ENCODE measurements at regions of chr22 and their contacts with region 1.

Region 1: GRCh38 chr22:20550821-20551744 is 43.7 kb downstream of the MED15 start:
- DNase-seq: peak; percentile 46 to 84 (median 63)
- ATAC-seq: peak; percentile 55 to 73
- H3K4me3 Mint-ChIP-seq: peak overlapping the region; percentile 75 to 92 (median 86)
- H3K27ac Mint-ChIP-seq: peak overlapping the region; percentile 96 to 100 (median 99)
- H3K4me1 Mint-ChIP-seq: peaks cover 45 to 94% (median 82%) of the 10 kb centered on the region in 4 donors
- H3K27me3 Mint-ChIP-seq: no peaks in the 10 kb centered on the region

Region 2: DNA sequence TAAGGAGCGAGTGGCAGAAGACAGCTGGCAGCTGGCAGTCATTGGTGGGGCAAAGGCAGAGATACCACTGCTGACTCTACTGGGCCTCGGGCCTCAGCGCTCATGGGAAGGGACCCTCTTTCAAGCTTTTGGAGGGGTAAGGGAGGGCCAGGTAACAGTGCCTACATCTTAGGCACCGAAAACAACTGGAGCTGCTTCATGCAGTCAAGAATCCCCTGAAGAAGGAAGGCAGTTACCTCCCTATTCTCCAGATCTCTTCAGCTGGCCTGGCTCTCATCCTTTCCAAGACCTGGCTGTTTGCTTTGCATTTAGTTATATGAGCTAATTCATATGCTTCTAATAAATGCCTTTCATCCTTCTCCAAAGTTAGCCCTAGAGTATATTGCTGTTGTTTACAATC is 173.0 kb before region 1 on chr22:
- POLR2A ChIA-PET with region 1: no interaction called
- DNase-seq: no peak
- ATAC-seq: no peak
- H3K4me3 Mint-ChIP-seq: no peak overlapping the region
- H3K27ac Mint-ChIP-seq: no peak overlapping the region
- H3K4me1 Mint-ChIP-seq: no peaks in the 10 kb centered on the region
- H3K27me3 Mint-ChIP-seq: peaks cover 0 to 1% (median 0%) of the 10 kb centered on the region in 5 donors

Region 3: DNA sequence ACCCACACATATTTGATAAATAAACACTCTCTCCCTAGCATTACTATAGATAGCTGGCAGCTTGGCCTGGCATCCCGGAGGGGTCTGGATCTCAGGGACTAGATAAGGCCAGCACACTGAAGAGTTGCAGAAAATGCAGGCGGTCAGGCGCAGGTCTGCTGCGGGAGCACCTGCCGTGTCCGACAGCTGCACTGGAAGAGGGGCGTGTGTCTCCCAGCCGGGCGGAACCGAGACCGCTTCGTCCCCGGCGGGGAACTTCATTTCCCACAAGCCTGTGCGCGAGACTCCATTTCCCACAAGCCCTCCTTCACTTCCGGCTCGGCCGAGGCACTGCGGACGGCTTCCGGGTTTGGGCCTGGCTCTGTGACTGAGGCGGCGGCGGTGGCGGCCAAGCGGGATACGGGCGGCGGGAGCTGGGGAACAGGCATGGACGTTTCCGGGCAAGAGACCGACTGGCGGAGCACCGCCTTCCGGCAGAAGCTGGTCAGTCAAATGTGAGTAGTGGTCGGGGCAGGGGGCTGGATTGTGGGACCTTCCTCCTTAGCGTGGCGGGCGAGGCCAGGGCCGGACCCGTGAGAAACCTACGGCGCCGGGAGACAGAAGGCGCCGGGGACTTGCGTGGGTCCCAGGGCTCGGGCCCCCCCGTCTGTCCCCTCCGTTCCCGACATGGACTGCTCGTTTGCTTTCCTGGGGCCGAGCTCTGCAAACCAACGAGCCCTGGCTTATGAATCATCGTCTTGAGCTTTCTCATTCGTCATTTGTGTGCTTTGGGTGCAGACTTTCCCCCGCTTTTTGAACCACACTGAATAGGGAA is 43.6 kb before region 1 on chr22 and contains the start of gene MED15:
- POLR2A ChIA-PET with region 1: interaction called, 140 read pairs
- DNase-seq: peak; percentile 76 to 91 (median 84)
- ATAC-seq: peak; percentile 91 to 92
- H3K4me3 Mint-ChIP-seq: peak within 1 kb of the TSS; percentile 94 to 100 (median 97)
- H3K27ac Mint-ChIP-seq: peak within 1 kb of the TSS; percentile 94 to 100 (median 97)
- H3K4me1 Mint-ChIP-seq: peaks cover 35 to 59% (median 53%) of the 10 kb centered on the region in 4 donors
- H3K27me3 Mint-ChIP-seq: no peaks in the 10 kb centered on the region
- polyA plus RNA-seq, gene MED15: 25.4 to 85.2 (median 38.2) TPM

Region 4: GRCh38 chr22:20523086-20523983 is 27.7 kb before region 1 on chr22:
- POLR2A ChIA-PET with region 1: interaction called, 27 read pairs
- DNase-seq: peak in 4 of 10 donors; percentile 9 to 23 (median 17)
- ATAC-seq: peak; percentile 53 to 60
- H3K4me3 Mint-ChIP-seq: peak overlapping the region; percentile 26 to 86 (median 63)
- H3K27ac Mint-ChIP-seq: peak overlapping the region; percentile 87 to 98 (median 94)
- H3K4me1 Mint-ChIP-seq: peaks cover 41 to 75% (median 73%) of the 10 kb centered on the region in 4 donors
- H3K27me3 Mint-ChIP-seq: no peaks in the 10 kb centered on the region

Region 5: DNA sequence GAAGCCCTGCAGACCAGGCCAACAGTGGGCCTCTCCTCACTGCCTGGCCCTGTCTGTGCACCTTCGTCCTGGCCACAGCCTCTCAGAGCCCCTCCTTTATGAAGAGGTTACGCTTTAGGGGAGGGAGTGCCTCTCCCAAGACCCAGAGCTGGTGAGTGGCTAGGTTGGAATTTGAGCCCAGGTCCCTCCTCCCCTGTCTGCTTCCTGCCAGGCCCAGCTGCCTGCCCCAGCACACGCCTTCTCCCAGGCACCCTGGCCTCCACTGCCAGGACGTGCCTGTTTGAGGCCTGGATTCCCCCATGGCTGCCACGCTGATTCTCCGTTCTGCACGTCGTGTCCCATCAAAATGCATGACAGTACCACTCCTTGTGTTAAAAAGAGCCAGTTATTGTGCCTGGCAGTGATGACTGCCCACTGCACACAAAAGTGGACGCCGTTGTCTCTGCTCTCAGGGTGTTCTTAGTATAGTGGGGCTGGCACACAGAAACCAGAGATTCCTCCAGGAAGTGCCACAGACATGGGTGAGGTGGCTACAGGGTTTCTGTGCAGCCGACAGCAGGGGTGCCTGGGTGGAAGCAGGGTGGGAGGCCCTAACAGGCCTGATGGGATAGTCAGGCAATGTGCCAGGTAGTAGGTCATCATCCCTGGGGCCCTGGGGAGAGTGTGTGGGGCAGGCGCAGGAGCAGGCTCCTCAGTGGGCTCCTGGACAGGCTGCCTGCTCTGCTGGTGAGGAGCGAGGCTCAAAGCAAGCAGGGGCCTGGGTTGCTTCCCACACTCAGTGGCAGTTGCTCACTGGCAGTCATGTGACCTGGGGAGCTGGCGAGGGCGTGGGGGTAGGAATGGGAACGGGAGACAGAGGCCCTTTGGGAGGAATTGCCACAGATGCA is 19.5 kb before region 1 on chr22:
- POLR2A ChIA-PET with region 1: interaction called, 27 read pairs
- DNase-seq: no peak
- ATAC-seq: peak; percentile 26 to 57
- H3K4me3 Mint-ChIP-seq: peak overlapping the region in 8 of 10 donors; percentile 25 to 78 (median 60)
- H3K27ac Mint-ChIP-seq: peak overlapping the region; percentile 82 to 98 (median 88)
- H3K4me1 Mint-ChIP-seq: peaks cover 40 to 79% (median 76%) of the 10 kb centered on the region in 4 donors
- H3K27me3 Mint-ChIP-seq: no peaks in the 10 kb centered on the region